ENCODE measurements at regions of chr1 and their contacts with region 1.

Region 1: GRCh38 chr1:40040511-40041465 is at the start of gene CAP1:
- DNase-seq: peak; percentile 100
- H3K4me3 Mint-ChIP-seq: peak within 1 kb of the TSS; percentile 97
- H3K27ac Mint-ChIP-seq: peak within 1 kb of the TSS; percentile 99
- H3K4me1 Mint-ChIP-seq: peaks cover 70% of the 10 kb centered on the region
- H3K27me3 Mint-ChIP-seq: no peaks in the 10 kb centered on the region
- total RNA-seq, gene CAP1: 421 and 435 TPM in 2 replicates

Region 2: GRCh38 chr1:39738622-39739366 is 302.0 kb before region 1 on chr1 and contains the start of gene PPIE:
- intact Hi-C with region 1: loop called (anchors 5 kb)
- DNase-seq: peak; percentile 83
- H3K4me3 Mint-ChIP-seq: peak within 1 kb of the TSS; percentile 96
- H3K27ac Mint-ChIP-seq: peak within 1 kb of the TSS; percentile 93
- H3K4me1 Mint-ChIP-seq: peaks cover 67% of the 10 kb centered on the region
- H3K27me3 Mint-ChIP-seq: no peaks in the 10 kb centered on the region
- total RNA-seq, gene PPIE: 68.1 and 75.0 TPM in 2 replicates

Region 3: DNA sequence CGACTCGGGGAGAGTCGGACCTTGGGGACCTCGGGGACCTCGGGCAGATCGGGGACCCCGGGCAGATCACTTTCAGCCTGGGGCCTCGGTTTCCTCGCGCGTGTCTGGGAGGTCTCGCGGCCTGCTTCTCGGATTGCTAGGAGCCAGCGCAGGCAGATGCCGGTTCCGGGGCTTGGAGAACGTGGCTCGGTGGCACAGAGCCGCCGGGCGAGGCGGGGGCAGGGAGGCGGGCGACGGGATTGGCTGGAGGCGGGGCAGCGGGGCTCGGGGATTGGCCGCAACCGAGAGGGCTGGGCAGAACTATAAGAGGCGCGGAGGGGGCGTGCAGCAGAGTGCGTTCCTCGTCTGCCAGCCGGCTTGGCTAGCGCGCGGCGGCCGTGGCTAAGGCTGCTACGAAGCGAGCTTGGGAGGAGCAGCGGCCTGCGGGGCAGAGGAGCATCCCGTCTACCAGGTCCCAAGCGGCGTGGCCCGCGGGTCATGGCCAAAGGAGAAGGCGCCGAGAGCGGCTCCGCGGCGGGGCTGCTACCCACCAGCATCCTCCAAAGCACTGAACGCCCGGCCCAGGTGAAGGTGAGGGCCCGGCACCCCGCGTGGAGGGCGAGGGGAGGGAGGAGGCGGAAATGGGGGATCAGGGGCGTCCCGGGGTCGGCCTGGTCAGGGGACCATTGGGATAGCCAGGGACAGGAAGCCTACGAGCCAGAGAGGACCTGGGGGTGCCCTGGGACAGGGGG is 85.8 kb before region 1 on chr1 and contains the start of gene MFSD2A:
- intact Hi-C with region 1: loop called (anchors 1 kb)
- DNase-seq: peak; percentile 80
- H3K4me3 Mint-ChIP-seq: peak within 1 kb of the TSS; percentile 98
- H3K27ac Mint-ChIP-seq: peak within 1 kb of the TSS; percentile 94
- H3K4me1 Mint-ChIP-seq: peaks cover 49% of the 10 kb centered on the region
- H3K27me3 Mint-ChIP-seq: no peaks in the 10 kb centered on the region
- total RNA-seq, gene MFSD2A: 55.3 and 56.2 TPM in 2 replicates

Region 4: DNA sequence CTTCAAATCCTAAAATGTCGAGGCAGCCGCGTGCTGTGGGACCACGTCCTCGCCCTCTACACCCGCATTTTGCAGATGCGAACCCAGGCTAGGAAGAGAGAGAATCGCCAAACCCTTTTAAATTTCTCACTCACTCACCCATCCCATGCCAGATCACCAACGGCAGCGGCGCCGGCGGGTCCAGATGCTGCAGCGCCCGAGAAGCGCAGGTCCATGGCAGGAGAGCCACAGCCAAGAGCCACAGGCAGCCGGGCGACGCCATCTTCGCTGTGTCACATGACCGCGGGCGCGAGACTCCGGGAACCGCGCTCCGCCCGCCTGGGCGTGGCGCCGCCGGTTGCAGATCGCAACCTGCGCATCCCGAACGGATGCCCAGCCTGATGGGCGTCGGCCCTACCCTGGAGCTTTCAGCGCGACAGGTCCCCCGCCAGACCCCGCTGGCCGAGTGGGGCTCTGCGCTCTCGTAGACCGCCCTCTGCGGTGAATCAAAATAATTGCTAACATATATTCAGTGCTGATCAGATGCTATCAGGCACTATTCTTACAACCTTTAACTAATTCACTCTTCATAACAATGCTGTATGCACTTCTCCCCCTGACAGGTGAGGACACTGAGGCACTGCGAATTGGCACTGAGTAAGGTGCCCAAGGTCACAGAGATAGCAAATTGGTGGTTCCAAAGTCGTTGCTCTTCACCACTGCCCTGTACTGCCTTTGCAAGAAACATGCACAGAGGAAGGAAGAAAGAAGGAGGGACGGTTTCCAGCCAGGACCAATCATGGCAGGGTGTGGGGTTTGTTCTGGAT is 56.4 kb after region 1 on chr1 and contains the start of gene PPT1:
- intact Hi-C with region 1: loop called (anchors 2 kb)
- DNase-seq: peak; percentile 79
- H3K4me3 Mint-ChIP-seq: peak within 1 kb of the TSS; percentile 97
- H3K27ac Mint-ChIP-seq: peak within 1 kb of the TSS; percentile 96
- H3K4me1 Mint-ChIP-seq: peaks cover 42% of the 10 kb centered on the region
- H3K27me3 Mint-ChIP-seq: peaks cover 10% of the 10 kb centered on the region
- total RNA-seq, gene PPT1: 101 and 110 TPM in 2 replicates

Region 5: GRCh38 chr1:40979233-40980067 is 938.7 kb after region 1 on chr1 and contains the start of gene CTPS1:
- intact Hi-C with region 1: loop called (anchors 10 kb)
- DNase-seq: peak; percentile 90
- H3K4me3 Mint-ChIP-seq: peak within 1 kb of the TSS; percentile 90
- H3K27ac Mint-ChIP-seq: peak within 1 kb of the TSS; percentile 97
- H3K4me1 Mint-ChIP-seq: peaks cover 45% of the 10 kb centered on the region
- H3K27me3 Mint-ChIP-seq: no peaks in the 10 kb centered on the region
- total RNA-seq, gene CTPS1: 172 and 174 TPM in 2 replicates

Measured in activated T-helper 1 cell treated with anti-CD3 and anti-CD28 coated beads, Interleukin-12 subunit alpha, Interleukin-12 subunit beta, Interleukin-2, Interleukin-4 antibody, amounts not matched to agents 30 ng/mL and 10 ng/mL and 1 ng/mL, durations not matched to agents 14 hours and 24 hours and 36 hours (primary cell).